ENCODE measurements at regions of chr13 and their contacts with region 1.

Region 1: GRCh38 chr13:27953676-27954405 is 15.3 kb downstream of the CDX2 start:
- DNase-seq: peak; percentile 68 to 83 (median 81)
- H3K4me3 ChIP-seq: peak overlapping the region; percentile 19 to 58 (median 47)
- H3K27ac ChIP-seq: no peak overlapping the region
- H3K4me1 ChIP-seq: peaks cover 0 to 20% (median 19%) of the 10 kb centered on the region in 4 experiments
- H3K27me3 ChIP-seq: peaks cover 14 to 97% (median 55%) of the 10 kb centered on the region in 5 experiments

Region 2: GRCh38 chr13:27362064-27362883 is 591.6 kb before region 1 on chr13:
- CTCF ChIA-PET with region 1: interaction called, 33 read pairs
- POLR2A ChIA-PET with region 1: interaction called, 3 read pairs
- DNase-seq: peak; percentile 80 to 88 (median 84)
- H3K4me3 ChIP-seq: peak overlapping the region; percentile 24 to 87 (median 63)
- H3K27ac ChIP-seq: no peak overlapping the region
- H3K4me1 ChIP-seq: peaks cover 0 to 15% (median 10%) of the 10 kb centered on the region in 4 experiments
- H3K27me3 ChIP-seq: peaks cover 0 to 19% (median 4%) of the 10 kb centered on the region in 5 experiments

Region 3: DNA sequence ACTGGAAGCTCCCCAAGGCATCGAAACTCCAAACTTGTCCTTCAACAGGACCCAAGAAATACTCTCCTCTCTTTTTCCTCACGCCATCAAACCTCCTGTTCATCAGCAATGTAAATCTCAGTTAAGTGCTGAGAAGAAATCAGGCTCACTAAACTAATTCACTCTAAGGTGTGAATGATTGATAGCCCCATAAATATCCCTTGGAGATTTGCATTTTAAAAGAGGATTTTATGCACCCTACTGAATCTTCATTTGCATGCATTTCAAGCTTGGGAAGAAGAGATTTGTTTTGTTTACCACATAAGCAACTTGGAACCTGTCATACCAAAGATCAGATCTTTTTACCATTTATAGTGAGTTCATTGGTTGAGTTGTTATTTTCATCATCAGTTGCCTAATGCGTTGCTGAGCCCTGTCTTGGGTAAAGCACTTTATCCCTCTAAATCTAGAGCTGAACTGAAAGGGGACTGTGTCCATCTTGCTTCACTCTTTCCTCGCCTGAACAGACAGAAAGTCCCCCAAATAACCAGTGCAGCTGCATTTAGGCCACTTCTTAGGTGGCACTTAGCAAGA is 201.8 kb before region 1 on chr13:
- CTCF ChIA-PET with region 1: no interaction called
- POLR2A ChIA-PET with region 1: no interaction called
- DNase-seq: no peak
- H3K4me3 ChIP-seq: no peak overlapping the region
- H3K27ac ChIP-seq: no peak overlapping the region
- H3K4me1 ChIP-seq: no peaks in the 10 kb centered on the region
- H3K27me3 ChIP-seq: peaks cover 0 to 15% (median 3%) of the 10 kb centered on the region in 5 experiments

Region 4: DNA sequence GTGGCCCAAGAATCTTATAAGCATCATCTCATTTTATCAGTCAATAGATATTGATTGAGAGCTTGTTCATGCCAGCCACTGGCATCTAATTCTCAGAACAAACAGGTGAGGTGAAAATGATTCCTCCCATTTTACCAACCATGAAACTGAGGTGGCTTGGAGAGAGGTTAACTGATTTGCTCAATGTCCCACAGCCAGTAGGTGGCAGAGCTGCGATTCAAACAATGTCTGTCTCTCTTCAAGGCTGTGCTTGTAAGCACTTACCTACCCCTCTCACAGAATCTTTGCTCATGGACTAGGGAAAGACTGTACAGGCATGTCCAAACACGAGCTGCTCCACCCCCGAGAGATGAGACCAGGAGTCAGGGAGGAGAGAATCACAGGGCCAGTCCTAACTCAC is 183.0 kb before region 1 on chr13:
- CTCF ChIA-PET with region 1: no interaction called
- POLR2A ChIA-PET with region 1: no interaction called
- DNase-seq: peak in 2 of 3 donors; percentile 24 to 25
- H3K4me3 ChIP-seq: no peak overlapping the region
- H3K27ac ChIP-seq: no peak overlapping the region
- H3K4me1 ChIP-seq: no peaks in the 10 kb centered on the region
- H3K27me3 ChIP-seq: peaks cover 2 to 64% (median 20%) of the 10 kb centered on the region in 5 experiments

Region 5: GRCh38 chr13:27868641-27869435 is 85.0 kb before region 1 on chr13:
- CTCF ChIA-PET with region 1: interaction called, 14 read pairs
- POLR2A ChIA-PET with region 1: no interaction called
- DNase-seq: peak; percentile 28 to 61 (median 51)
- H3K4me3 ChIP-seq: no peak overlapping the region
- H3K27ac ChIP-seq: no peak overlapping the region
- H3K4me1 ChIP-seq: no peaks in the 10 kb centered on the region
- H3K27me3 ChIP-seq: peaks cover 4 to 56% (median 19%) of the 10 kb centered on the region in 5 experiments

Region 6: DNA sequence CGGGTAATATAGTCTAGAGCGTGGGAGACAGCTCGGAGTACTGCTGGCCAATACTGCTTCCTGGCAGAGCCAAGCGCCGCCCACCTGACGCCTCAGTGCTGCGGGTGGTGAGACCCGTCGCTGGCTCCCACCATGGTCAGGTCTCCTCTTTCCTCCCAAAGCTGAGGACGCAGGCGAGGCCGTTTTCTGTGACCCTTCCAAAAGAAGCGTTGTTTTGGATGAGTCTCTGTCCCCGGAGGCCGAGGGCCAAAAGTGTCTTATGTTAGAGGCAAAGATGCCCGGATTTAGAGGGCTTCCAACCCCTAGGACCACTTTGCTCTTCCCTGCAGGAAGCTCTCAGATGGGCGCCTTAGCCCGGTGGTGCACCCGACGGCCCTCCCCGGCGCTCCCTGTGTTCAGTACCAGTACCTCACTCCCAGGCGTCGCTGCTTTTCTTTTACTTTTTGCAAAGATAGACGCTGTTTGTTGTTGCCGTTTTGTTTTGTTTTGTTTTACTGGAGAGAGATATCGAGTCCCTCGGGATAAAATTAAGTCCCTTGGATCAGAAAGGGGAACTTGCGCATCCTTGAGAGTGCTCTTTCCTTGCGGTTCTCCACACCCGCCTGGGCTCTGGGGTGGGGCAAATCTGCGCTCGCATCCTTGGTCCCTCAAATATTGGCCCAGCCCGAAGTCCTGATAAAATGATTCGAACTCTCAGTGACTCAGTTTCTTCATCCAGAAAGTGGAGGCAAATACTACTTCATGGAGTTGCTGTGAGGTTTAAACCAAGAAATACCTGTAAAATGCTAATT is 27.0 kb before region 1 on chr13:
- CTCF ChIA-PET with region 1: interaction called, 16 read pairs
- POLR2A ChIA-PET with region 1: interaction called, 4 read pairs
- DNase-seq: peak in 1 of 3 donors; percentile 50
- H3K4me3 ChIP-seq: no peak overlapping the region
- H3K27ac ChIP-seq: no peak overlapping the region
- H3K4me1 ChIP-seq: peaks cover 0 to 27% (median 13%) of the 10 kb centered on the region in 4 experiments
- H3K27me3 ChIP-seq: peaks cover 34 to 99% (median 77%) of the 10 kb centered on the region in 5 experiments

Region 7: DNA sequence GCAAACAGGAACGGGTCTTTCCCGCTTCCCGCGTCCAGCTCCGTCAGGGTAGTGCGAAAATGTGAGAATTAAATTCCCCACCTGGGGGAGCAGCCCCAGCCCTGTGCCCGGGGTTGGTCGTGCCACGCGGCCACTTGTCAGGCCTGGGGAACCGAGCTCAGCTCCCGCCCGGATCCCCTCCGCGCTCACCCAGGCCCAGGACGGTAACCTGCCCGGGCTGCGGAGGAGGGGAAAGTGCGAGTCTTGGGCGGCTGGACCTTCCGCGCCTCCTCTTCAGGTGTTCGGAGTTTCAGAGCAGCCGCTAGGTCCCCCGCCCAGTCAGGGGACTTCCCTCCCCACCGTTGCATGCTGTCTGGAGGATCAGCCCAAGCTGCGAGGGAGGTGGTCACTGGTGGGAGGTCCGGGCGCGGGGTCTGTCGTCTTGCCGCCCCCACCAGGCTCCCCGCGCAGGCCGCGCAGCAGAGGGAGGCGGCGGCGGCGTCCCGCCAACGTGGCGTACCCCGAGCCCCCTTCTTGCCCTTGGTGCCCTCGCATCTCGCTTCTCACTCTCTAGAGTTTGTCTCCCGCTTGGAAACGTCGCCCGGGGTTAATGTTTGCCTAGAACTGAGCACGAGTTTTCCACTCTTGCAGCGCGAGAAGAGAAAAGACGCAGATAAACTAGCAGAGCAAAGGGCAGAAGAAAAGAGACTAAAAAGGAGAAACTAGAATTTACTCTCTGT is 26.6 kb after region 1 on chr13:
- CTCF ChIA-PET with region 1: interaction called, 26 read pairs
- POLR2A ChIA-PET with region 1: no interaction called
- DNase-seq: no peak
- H3K4me3 ChIP-seq: no peak overlapping the region
- H3K27ac ChIP-seq: no peak overlapping the region
- H3K4me1 ChIP-seq: peaks cover 0 to 33% (median 18%) of the 10 kb centered on the region in 4 experiments
- H3K27me3 ChIP-seq: peaks cover 7 to 82% (median 55%) of the 10 kb centered on the region in 5 experiments

Measured in common myeloid progenitor, CD34-positive (primary cell).